IMR-90 (cell line): ENCODE measurements at regions of chrX and their contacts with region 1.

Region 1: DNA sequence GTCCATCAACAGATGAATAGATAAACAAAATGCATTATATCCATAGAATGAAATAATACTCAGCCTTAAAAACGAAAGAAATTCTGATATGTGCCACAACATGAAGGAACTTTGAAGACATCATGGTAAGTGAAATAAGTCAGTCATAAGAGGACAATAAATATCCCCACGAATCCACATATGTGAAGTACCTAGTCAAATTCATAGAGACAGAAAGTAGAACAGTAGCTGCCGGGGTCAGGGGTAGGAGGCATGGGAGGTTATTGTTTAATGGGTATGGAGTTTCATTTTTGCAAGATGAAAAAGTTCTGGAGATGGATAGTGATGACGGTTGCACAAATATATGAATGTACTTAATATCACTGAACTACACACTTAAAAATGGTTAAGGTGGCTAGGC is 151.6 kb upstream of the MAP3K15 start:
- DNase-seq: no peak
- ATAC-seq: no peak
- H3K4me3 ChIP-seq: no peak overlapping the region
- H3K27ac ChIP-seq: no peak overlapping the region
- H3K4me1 ChIP-seq: peaks cover 1% of the 10 kb centered on the region; the same call in 1 of the 2 replicates
- H3K27me3 ChIP-seq: no peaks in the 10 kb centered on the region
- CTCF ChIP-seq: no peak
- POLR2A ChIP-seq: no peak
- RAD21 ChIP-seq: no peak

Region 2: DNA sequence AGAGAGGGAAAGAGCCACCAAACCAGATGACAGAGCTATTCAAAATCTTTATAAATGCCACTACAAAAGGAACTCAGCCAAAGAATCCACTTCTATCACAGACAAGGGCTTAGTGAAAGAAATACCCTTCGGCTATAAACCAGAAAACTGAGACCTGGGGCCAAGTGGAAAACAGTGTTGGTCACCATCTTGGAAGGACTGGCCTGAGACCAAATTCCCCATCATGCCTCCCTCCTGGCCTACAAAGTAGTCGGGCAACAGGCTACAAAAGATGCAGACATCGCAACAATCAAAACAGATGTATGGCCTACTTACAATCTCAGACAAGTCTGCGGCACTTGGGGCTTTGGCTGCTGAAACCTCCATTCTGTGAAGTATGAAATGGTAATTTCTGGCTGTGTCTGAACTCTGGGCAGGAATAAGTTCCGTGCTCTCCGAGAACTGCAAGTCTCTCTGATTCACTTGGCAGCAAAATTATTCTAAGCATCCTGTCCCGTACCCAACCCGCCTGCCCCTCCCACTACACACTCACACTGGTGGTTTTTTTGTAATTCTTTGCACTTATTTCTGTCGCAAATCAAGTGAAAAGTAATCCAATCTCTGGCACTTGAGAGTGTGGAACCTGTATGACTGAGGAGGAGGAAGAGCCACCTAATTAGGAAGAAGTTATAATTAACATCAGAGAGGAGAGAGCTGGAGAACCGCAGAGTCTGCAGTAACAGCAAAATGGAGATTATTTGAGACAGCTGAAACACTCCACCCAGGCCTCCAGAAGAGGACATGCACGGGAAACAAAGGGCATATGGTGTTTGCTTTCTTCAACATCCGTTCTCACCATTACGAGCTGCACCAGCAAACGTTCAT is 132.6 kb after region 1 on chrX:
- CTCF ChIA-PET with region 1: no interaction called
- POLR2A ChIA-PET with region 1: interaction called, 10 read pairs
- dilution Hi-C with region 1: no loop called
- in situ Hi-C with region 1: no loop called
- intact Hi-C with region 1: no loop called
- DNase-seq: peak; percentile 31
- ATAC-seq: peak; percentile 37; the same call in 1 of the 2 replicates
- H3K4me3 ChIP-seq: no peak overlapping the region
- H3K27ac ChIP-seq: no peak overlapping the region
- H3K4me1 ChIP-seq: peaks cover 2% of the 10 kb centered on the region; the same call in 1 of the 2 replicates
- H3K27me3 ChIP-seq: no peaks in the 10 kb centered on the region
- CTCF ChIP-seq: no peak
- POLR2A ChIP-seq: no peak
- RAD21 ChIP-seq: no peak

Region 3: DNA sequence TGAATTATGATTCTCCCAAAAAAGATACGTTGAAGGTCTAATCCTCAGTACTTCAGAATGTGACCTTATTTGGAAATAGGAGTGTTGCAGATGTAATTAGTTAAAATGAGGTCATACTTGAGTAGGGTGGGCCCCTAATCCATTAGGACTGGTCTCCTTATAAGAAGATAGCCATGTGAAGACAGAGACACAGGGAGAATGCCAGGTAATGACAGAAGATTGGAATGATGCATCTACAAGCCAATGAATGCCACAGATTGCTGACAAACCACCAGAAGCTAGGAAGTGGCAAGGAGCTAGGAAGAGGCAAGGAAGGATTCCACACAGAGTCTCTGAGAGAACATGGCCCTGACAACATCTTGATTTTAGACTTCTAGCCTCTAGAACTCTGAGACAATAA is 607.2 kb after region 1 on chrX:
- CTCF ChIA-PET with region 1: no interaction called
- POLR2A ChIA-PET with region 1: no interaction called
- dilution Hi-C with region 1: no loop called
- in situ Hi-C with region 1: no loop called
- intact Hi-C with region 1: no loop called
- DNase-seq: no peak
- ATAC-seq: no peak
- H3K4me3 ChIP-seq: no peak overlapping the region
- H3K27ac ChIP-seq: no peak overlapping the region
- H3K4me1 ChIP-seq: no peaks in the 10 kb centered on the region
- H3K27me3 ChIP-seq: no peaks in the 10 kb centered on the region
- CTCF ChIP-seq: no peak
- POLR2A ChIP-seq: no peak
- RAD21 ChIP-seq: no peak